ENCODE measurements at regions of chrX and their contacts with region 1.

Region 1: GRCh38 chrX:38327007-38327774 is at the start of gene RPGR:
- DNase-seq: peak; percentile 90
- ATAC-seq: peak; percentile 88
- H3K4me3 ChIP-seq: peak within 1 kb of the TSS; percentile 79
- H3K27ac ChIP-seq: peak within 1 kb of the TSS; percentile 74
- H3K4me1 ChIP-seq: peaks cover 17% of the 10 kb centered on the region
- H3K27me3 ChIP-seq: no peaks in the 10 kb centered on the region
- CTCF ChIP-seq: peak; percentile 82
- total RNA-seq, gene RPGR: 8.3 and 9.3 TPM in 2 replicates

Region 2: GRCh38 chrX:38192007-38192810 is 135.0 kb before region 1 on chrX:
- CTCF ChIA-PET with region 1: interaction called, 4 read pairs
- POLR2A ChIA-PET with region 1: no interaction called
- intact Hi-C with region 1: loop called (anchors 2 kb)
- DNase-seq: peak; percentile 44
- ATAC-seq: peak; percentile 55; the same call in 1 of the 2 replicates
- H3K4me3 ChIP-seq: no peak overlapping the region
- H3K27ac ChIP-seq: no peak overlapping the region
- H3K4me1 ChIP-seq: no peaks in the 10 kb centered on the region
- H3K27me3 ChIP-seq: no peaks in the 10 kb centered on the region
- CTCF ChIP-seq: peak; percentile 67

Region 3: GRCh38 chrX:38275615-38276014 is 51.6 kb before region 1 on chrX:
- CTCF ChIA-PET with region 1: interaction called, 3 read pairs
- POLR2A ChIA-PET with region 1: no interaction called
- intact Hi-C with region 1: loop called (anchors 2 kb)
- DNase-seq: peak; percentile 90
- ATAC-seq: peak; percentile 88
- H3K4me3 ChIP-seq: no peak overlapping the region
- H3K27ac ChIP-seq: peak overlapping the region; percentile 68
- H3K4me1 ChIP-seq: peaks cover 53% of the 10 kb centered on the region
- H3K27me3 ChIP-seq: no peaks in the 10 kb centered on the region
- CTCF ChIP-seq: no peak

Region 4: DNA sequence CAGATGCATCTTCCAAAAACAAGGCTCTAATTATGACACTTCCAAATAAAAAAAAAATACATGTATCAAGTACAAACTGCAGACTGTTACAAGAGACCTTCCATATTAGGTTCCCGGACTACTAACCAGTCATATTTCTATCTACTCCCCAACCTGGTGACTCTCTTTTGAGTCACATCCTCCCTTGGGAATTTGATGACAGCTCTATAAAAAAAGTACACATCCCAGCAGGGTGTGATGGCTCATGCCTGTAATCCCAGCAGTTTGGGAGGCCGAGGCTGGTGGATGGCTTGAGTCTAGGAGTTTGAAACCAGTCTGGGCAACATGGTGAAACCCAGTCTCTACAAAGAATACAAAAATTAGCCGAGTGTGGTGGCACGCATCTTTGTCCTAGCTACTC is 14.8 kb before region 1 on chrX:
- CTCF ChIA-PET with region 1: interaction called, 4 read pairs
- POLR2A ChIA-PET with region 1: interaction called, 4 read pairs
- intact Hi-C with region 1: loop called (anchors 1 kb)
- DNase-seq: peak; percentile 92
- ATAC-seq: peak; percentile 97
- H3K4me3 ChIP-seq: no peak overlapping the region
- H3K27ac ChIP-seq: peak overlapping the region; percentile 82
- H3K4me1 ChIP-seq: peaks cover 24% of the 10 kb centered on the region
- H3K27me3 ChIP-seq: no peaks in the 10 kb centered on the region
- CTCF ChIP-seq: no peak